Prostate gland (tissue), 2 donors: ENCODE measurements at regions of chr10 and their contacts with region 1.

Region 1: DNA sequence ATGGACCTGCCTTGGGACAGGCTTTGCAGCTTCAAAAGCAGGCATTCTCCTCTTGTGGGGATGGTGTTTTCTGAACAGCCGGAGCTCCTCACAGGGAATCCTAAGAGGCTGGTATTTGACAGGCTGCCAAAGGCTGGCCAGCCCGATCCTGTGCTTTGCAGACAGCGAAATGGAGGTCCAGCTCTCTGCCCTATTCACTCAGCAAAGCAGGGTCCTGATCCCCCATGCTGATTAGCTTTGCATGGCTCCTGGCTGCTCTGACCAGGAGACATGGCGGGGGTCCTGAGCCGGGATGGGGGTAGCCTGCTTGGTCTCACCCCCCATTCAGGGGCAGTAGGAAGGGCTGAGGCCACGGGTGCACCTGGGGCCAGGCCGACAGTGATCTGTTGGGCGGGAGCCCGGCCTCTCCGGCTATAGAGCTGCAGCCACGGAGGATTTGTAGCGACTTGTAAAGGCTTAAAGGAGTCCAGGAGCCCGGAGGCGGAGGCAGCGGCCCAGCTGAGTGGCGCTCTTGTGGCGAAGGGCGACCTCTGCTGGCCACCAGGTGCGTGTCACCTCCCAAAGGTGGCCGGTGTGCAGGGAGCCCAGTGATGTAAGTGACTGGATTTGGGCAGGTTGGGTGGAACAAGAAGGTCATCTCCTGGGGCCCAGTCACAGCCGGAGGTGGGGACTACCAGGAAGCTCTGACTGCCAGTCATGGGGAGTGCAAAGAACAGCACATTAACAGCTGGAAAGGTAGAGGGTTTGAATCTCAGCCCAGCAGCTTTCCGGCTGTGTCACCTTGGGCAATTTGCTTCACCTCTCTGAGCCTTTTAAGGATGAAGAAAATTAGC is 126.5 kb downstream of the ZMIZ1 start:
- DNase-seq: peak; percentile 90
- H3K4me3 ChIP-seq: no peak overlapping the region
- H3K27ac ChIP-seq: peak overlapping the region; percentile 61 to 66
- H3K4me1 ChIP-seq: peaks cover 7% of the 10 kb centered on the region
- H3K27me3 ChIP-seq: no peaks in the 10 kb centered on the region
- CTCF ChIP-seq: peak; percentile 94 to 98 (median 98)
- POLR2A ChIP-seq: no peak

Region 2: DNA sequence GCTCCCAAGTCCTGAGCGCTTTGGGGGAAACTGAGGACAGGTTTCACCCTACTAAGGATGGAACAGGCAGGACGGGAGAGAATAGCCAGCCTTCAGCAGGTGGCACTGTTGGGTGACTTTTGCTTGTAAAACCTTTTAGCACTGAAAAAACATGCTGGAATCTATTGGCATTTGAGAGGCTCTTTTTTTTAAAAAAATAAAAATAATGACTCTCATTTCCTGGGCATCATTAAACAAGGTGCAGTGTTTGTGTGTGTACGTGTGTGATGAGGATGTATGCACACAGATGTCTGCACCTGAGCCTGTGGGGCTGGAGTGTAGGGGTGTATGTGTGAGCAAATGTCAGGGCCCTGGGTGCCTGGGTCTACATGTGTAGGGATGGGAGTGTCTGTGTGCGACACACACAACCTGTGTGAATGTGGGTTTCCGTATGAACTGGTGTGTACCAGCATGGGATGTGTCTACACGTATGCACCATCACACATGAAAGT is 983.7 kb before region 1 on chr10:
- intact Hi-C with region 1: loop called (anchors 5 kb)
- DNase-seq: peak; percentile 25
- H3K4me3 ChIP-seq: no peak overlapping the region
- H3K27ac ChIP-seq: no peak overlapping the region
- H3K4me1 ChIP-seq: no peaks in the 10 kb centered on the region
- H3K27me3 ChIP-seq: no peaks in the 10 kb centered on the region
- CTCF ChIP-seq: peak; percentile 18 to 64 (median 48)
- POLR2A ChIP-seq: no peak

Region 3: GRCh38 chr10:78437998-78438906 is 757.1 kb before region 1 on chr10:
- intact Hi-C with region 1: loop called (anchors 10 kb)
- DNase-seq: no peak
- H3K4me3 ChIP-seq: no peak overlapping the region
- H3K27ac ChIP-seq: no peak overlapping the region
- H3K4me1 ChIP-seq: peaks cover 4% of the 10 kb centered on the region
- H3K27me3 ChIP-seq: no peaks in the 10 kb centered on the region
- CTCF ChIP-seq: peak in 1 of 4 experiments; percentile 20
- POLR2A ChIP-seq: no peak

Region 4: DNA sequence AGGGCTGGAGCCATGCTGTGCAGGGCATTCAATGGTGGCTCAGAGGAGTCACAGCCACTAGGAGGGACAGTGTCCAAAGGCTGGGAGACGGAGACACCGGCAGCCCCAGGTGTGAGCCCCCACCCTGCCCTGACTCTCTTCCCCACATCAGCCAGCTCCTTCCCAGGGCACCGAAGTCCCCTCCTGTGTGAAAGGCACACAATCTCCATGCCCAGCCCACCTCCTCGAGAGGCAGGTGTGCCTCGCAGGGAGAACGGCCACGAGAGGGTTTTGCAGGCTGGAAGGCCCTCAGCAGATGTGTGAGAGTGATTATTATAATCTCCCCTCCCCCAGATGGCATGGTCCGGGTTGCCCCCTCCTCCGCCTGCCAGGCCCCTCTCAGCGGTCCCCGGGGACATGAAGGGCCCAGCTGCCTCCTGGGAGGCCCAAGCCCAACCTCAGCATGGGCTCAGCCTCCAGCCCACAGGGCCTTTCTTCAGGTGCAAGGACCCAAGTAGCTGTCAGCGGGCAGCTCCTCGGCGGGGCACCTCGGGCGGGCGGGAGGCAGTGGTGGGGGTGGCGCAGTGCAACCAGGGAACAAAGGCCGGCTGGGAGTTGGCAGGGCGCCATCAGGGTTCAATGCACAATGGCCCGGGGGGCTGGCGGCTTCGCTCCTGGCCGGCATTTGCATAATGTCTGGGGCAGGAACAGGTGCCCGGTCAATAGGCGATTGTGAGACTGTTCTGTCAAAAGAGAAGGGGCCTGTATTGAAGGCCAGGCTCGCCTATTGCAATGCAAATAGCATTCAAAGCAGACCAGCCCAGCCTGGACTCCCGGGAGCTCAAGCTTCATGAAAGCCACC is 281.9 kb before region 1 on chr10:
- intact Hi-C with region 1: loop called (anchors 10 kb)
- DNase-seq: peak; percentile 11
- H3K4me3 ChIP-seq: no peak overlapping the region
- H3K27ac ChIP-seq: no peak overlapping the region
- H3K4me1 ChIP-seq: no peaks in the 10 kb centered on the region
- H3K27me3 ChIP-seq: no peaks in the 10 kb centered on the region
- CTCF ChIP-seq: no peak
- POLR2A ChIP-seq: no peak

Region 5: GRCh38 chr10:79068562-79069324 is 126.6 kb before region 1 on chr10 and contains the start of gene ZMIZ1:
- intact Hi-C with region 1: loop called (anchors 5 kb)
- DNase-seq: peak; percentile 92
- H3K4me3 ChIP-seq: peak within 1 kb of the TSS; percentile 92 to 93
- H3K27ac ChIP-seq: peak within 1 kb of the TSS; percentile 97 to 99
- H3K4me1 ChIP-seq: peaks cover 19% of the 10 kb centered on the region
- H3K27me3 ChIP-seq: no peaks in the 10 kb centered on the region
- CTCF ChIP-seq: peak in 2 of 4 experiments; percentile 30 to 34
- POLR2A ChIP-seq: peak; percentile 70
- total RNA-seq, gene ZMIZ1: 69.6 to 78.5 TPM

Region 6: GRCh38 chr10:79266543-79267312 is 71.4 kb after region 1 on chr10:
- intact Hi-C with region 1: no loop called
- DNase-seq: no peak
- H3K4me3 ChIP-seq: no peak overlapping the region
- H3K27ac ChIP-seq: peak overlapping the region; percentile 32 to 39
- H3K4me1 ChIP-seq: peaks cover 14% of the 10 kb centered on the region
- H3K27me3 ChIP-seq: no peaks in the 10 kb centered on the region
- CTCF ChIP-seq: no peak
- POLR2A ChIP-seq: no peak